GM23248 (cell line): ENCODE measurements at regions of chr10 and their contacts with region 1.

Region 1: DNA sequence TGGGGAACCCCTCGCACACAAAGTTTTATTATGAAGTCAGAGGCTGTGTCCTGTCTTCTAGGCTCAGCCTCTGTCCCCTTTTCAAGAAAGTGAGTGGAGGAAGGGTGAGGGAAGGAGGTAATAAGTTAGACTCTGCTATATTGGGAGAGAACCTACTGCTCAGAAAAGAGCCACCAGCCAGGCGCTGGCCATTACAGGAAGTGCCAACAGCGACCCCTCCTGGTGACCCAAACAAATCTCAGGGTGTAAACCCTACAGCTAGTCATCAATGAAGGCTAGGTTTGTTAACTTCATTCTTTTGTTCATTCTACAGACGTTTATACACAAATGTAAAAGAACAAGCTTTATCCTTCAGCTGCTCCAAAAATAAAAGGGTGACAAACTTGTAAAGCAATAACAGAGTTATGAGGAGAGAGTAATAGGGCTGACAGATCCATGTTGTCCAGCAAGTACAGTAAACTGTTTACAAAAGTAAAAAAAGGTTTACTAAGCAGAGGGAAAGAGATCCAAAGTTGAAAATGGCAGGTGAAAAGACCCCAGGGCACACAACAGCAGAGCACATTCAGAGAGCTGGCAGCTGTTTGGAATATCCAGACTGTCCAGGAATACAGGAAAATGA is 82.7 kb downstream of the FAM204A start:
- DNase-seq: peak; percentile 72
- H3K4me3 ChIP-seq: no peak overlapping the region
- H3K27ac ChIP-seq: no peak overlapping the region
- H3K4me1 ChIP-seq: no peaks in the 10 kb centered on the region
- H3K27me3 ChIP-seq: peaks cover 12% of the 10 kb centered on the region; the same call in 1 of the 2 replicates

Region 2: DNA sequence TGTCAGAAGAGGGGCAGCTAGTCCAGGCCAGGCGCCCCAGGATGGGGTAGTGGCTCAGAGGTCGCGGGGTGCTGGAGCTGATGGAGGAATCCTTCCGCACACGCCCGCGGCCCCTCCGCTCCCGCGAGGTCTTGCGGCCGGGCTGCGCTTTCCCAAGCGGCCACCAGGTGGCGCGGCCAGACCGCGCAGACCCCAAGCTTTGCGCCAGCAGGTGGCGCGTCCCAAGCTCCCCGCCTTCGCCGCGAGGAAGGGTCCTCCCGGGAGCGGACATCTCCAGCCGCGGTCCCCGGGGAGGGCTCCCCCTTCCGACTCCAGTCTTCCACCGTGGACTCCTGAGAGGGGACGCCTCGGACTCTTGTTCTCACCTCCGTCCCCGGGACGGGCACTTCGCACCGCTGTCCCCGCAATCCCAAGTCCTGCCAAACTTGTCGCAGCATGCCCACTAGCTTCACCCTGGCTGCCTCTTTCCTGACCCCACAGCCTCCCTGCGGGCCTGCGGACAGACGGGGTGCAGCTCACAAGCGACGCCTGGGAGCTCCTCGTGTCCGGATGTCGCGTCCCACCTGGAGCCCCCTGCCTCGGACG is 1042.7 kb before region 1 on chr10:
- in situ Hi-C with region 1: loop called (anchors 25 kb)
- DNase-seq: peak; percentile 78
- H3K4me3 ChIP-seq: peak overlapping the region; percentile 84
- H3K27ac ChIP-seq: no peak overlapping the region
- H3K4me1 ChIP-seq: no peaks in the 10 kb centered on the region
- H3K27me3 ChIP-seq: peaks cover 18% of the 10 kb centered on the region

Region 3: GRCh38 chr10:118035354-118036005 is 223.9 kb before region 1 on chr10:
- in situ Hi-C with region 1: no loop called
- DNase-seq: no peak
- H3K4me3 ChIP-seq: no peak overlapping the region
- H3K27ac ChIP-seq: no peak overlapping the region
- H3K4me1 ChIP-seq: peaks cover 8% of the 10 kb centered on the region
- H3K27me3 ChIP-seq: no peaks in the 10 kb centered on the region